ENCODE measurements at regions of chr5 and their contacts with region 1.

Region 1: DNA sequence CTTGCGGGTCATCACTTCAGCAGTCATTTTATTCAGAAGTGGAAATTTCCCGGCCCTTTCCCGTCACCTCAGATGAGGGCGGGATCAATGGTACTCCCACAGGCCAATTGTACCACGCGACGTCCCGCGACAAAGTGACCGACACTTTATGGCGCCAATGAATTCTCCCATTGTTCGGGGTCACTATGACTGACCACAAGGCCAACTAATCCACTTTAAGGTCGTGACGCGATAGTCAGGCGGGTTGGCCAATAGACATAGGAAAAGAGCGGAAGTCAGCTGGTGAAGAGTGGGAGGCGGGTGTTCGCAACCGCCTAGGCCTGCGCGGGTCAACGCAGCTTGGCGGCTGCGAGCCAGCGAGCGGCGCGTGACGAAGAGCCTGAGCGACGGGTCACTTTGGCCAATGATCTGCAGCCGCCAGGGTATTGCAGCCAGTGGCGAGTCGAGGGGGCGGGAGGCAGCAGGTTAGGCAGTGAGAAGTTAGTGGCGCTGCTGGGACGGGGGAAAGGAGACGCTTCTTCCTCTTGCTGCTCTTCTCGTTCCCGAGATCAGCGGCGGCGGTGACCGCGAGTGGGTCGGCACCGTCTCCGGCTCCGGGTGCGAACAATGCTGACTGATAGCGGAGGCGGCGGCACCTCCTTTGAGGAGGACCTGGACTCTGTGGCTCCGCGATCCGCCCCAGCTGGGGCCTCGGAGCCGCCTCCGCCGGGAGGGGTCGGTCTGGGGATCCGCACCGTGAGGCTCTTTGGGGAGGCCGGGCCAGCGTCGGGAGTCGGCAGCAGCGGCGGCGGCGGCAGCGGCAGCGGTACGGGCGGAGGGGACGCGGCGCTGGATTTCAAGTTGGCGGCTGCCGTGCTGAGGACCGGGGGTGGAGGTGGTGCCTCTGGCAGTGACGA is at the start of gene ANKHD1:
- DNase-seq: peak; percentile 98
- ATAC-seq: peak; percentile 83
- H3K4me3 Mint-ChIP-seq: no peak within 1 kb of the TSS
- H3K27ac Mint-ChIP-seq: peak within 1 kb of the TSS; percentile 87
- H3K4me1 Mint-ChIP-seq: peaks cover 24% of the 10 kb centered on the region
- H3K27me3 Mint-ChIP-seq: no peaks in the 10 kb centered on the region
- total RNA-seq, gene ANKHD1: 77.1 to 93.5 TPM

Region 2: DNA sequence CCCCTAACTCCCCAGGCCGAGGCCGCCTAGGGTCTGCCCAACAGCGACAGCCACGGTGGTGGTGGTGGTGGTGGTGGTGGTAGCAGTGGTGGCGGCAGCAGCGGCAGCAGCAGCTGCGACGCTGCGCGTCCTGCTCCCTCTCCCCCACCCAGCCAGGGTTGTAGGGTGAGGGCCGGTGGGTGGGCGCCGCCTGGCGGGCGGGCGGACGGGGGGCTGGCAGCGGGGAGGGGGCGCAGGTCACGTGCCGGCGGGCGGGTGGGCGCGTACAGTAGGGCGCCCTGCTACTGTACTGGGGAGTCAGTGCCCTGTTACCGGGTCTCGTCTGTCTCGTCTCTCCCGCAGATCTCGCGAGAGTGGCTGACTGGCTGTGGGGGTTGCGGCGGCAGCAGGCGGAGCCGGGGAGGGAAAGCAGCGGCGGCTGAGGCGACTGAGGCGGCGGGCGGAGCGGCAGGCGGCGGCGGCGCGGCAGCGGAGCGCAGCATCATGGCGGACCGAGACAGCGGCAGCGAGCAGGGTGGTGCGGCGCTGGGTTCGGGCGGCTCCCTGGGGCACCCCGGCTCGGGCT is 287.8 kb before region 1 on chr5 and contains the start of gene PURA:
- CTCF ChIA-PET with region 1: no interaction called
- POLR2A ChIA-PET with region 1: no interaction called
- intact Hi-C with region 1: loop called in 1 of 2 experiments (anchors 1 kb)
- DNase-seq: peak; percentile 98
- ATAC-seq: peak; percentile 92
- H3K4me3 Mint-ChIP-seq: peak within 1 kb of the TSS; percentile 89
- H3K27ac Mint-ChIP-seq: peak within 1 kb of the TSS; percentile 84
- H3K4me1 Mint-ChIP-seq: peaks cover 65% of the 10 kb centered on the region
- H3K27me3 Mint-ChIP-seq: peaks cover 3% of the 10 kb centered on the region
- total RNA-seq, gene PURA: 9.5 to 10.7 TPM

Region 3: DNA sequence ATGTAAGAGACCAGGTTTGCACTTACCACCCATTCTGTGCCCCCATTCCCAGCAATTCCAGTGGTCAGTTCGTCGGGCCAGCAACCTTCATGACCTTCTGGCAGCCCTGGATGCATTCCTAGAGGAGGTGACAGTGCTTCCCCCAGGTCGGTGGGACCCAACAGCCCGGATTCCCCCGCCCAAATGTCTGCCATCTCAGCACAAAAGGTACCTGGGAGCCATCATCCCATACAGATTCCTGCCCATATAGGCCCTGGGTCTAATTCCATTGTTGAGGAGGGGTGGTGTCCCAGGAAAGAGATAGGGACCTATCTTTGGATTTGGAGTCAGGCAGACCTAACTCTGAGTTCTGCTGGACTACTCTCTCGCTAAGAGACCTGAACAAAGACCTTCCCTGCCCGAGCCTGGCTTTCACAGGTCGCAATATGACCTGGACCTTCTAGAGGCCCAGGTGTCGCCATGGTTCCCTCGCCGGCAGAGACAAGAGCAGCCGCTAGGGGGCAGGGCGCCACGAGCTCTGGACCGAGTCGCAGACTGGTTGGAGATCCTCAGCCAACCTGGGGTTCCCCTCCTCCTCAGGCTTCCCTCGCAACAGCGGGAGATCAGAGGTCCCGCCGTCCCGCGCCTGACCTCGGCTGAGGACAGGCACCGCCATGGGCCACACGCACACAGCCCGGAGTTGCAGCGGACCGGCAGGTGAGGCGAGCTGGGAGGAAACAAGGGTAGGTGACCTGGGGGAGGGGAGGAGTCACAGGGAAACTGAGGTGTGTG is 38.6 kb before region 1 on chr5:
- CTCF ChIA-PET with region 1: interaction called, 5 read pairs
- POLR2A ChIA-PET with region 1: interaction called, 3 read pairs
- intact Hi-C with region 1: loop called in 1 of 2 experiments (anchors 2 kb)
- DNase-seq: peak; percentile 93
- ATAC-seq: peak; percentile 95
- H3K4me3 Mint-ChIP-seq: peak overlapping the region; percentile 70
- H3K27ac Mint-ChIP-seq: peak overlapping the region; percentile 61
- H3K4me1 Mint-ChIP-seq: peaks cover 11% of the 10 kb centered on the region
- H3K27me3 Mint-ChIP-seq: peaks cover 5% of the 10 kb centered on the region

Region 4: GRCh38 chr5:140564196-140565023 is 162.8 kb after region 1 on chr5 and contains the starts of genes APBB3 and SLC35A4:
- CTCF ChIA-PET with region 1: no interaction called
- POLR2A ChIA-PET with region 1: no interaction called
- intact Hi-C with region 1: loop called (anchors 1 kb)
- DNase-seq: peak; percentile 96
- ATAC-seq: peak; percentile 95
- H3K4me3 Mint-ChIP-seq: peak within 1 kb of the TSS; percentile 98
- H3K27ac Mint-ChIP-seq: peak within 1 kb of the TSS; percentile 99
- H3K4me1 Mint-ChIP-seq: peaks cover 49% of the 10 kb centered on the region
- H3K27me3 Mint-ChIP-seq: no peaks in the 10 kb centered on the region
- total RNA-seq, gene APBB3: 12.8 to 19.0 TPM
- total RNA-seq, gene SLC35A4: 61.8 to 65.4 TPM

Region 5: GRCh38 chr5:140647042-140647341 is 245.4 kb after region 1 on chr5:
- CTCF ChIA-PET with region 1: no interaction called
- POLR2A ChIA-PET with region 1: interaction called, 13 read pairs
- intact Hi-C with region 1: loop called in 1 of 2 experiments (anchors 1 kb)
- DNase-seq: no peak
- ATAC-seq: peak; percentile 14
- H3K4me3 Mint-ChIP-seq: peak overlapping the region; percentile 97
- H3K27ac Mint-ChIP-seq: peak overlapping the region; percentile 98
- H3K4me1 Mint-ChIP-seq: peaks cover 27% of the 10 kb centered on the region
- H3K27me3 Mint-ChIP-seq: no peaks in the 10 kb centered on the region

Region 6: GRCh38 chr5:140700177-140701144 is 298.9 kb after region 1 on chr5 and contains the start of gene ZMAT2:
- CTCF ChIA-PET with region 1: interaction called, 3 read pairs
- POLR2A ChIA-PET with region 1: interaction called, 3 read pairs
- intact Hi-C with region 1: loop called (anchors 1 kb)
- DNase-seq: peak; percentile 96
- ATAC-seq: peak; percentile 100
- H3K4me3 Mint-ChIP-seq: peak within 1 kb of the TSS; percentile 94
- H3K27ac Mint-ChIP-seq: peak within 1 kb of the TSS; percentile 94
- H3K4me1 Mint-ChIP-seq: peaks cover 24% of the 10 kb centered on the region
- H3K27me3 Mint-ChIP-seq: no peaks in the 10 kb centered on the region
- total RNA-seq, gene ZMAT2: 49.9 to 55.3 TPM

Region 7: GRCh38 chr5:140926443-140927227 is 525.0 kb after region 1 on chr5:
- CTCF ChIA-PET with region 1: no interaction called
- POLR2A ChIA-PET with region 1: no interaction called
- intact Hi-C with region 1: no loop called
- DNase-seq: peak; percentile 70
- ATAC-seq: peak; percentile 55
- H3K4me3 Mint-ChIP-seq: peak overlapping the region; percentile 40
- H3K27ac Mint-ChIP-seq: no peak overlapping the region
- H3K4me1 Mint-ChIP-seq: peaks cover 7% of the 10 kb centered on the region
- H3K27me3 Mint-ChIP-seq: peaks cover 51% of the 10 kb centered on the region

Region 8: DNA sequence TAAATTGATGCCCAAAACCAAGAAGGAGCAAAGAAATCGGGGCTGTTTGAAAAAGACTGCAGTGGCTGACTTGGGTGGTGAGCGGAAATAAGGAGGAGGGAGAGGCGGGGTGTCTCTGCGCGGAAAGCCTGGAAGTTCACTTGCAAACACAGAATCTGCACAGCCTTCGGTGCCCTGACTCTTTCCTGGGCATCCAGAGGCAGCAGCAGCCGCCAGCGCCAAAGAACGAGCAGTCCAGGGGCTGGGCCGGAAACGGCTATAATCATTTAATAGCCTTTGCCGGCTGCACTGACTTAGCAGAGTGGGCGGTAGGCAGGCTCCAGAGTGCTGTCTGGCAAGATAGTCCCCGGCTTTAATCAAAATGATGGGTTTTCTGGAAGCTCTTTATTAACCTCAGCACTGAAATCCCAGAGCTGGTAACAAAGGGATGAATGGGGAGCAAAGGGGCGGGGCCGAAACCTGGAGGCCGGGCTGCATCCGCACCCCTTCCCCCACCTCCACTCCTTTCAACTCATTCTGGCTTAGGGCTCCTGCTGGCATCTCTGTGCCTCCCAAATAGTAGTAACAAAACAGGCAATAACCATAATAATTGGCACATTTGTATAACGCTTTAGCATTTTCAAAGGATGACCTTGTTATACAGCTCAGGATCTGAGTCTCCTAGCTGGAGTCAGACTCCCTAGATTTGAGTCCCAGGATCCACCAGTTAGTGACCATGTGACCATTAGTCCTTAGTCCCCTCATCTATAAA is 600.4 kb after region 1 on chr5:
- CTCF ChIA-PET with region 1: no interaction called
- POLR2A ChIA-PET with region 1: no interaction called
- intact Hi-C with region 1: no loop called
- DNase-seq: peak; percentile 6
- ATAC-seq: no peak
- H3K4me3 Mint-ChIP-seq: peak overlapping the region; percentile 47
- H3K27ac Mint-ChIP-seq: no peak overlapping the region
- H3K4me1 Mint-ChIP-seq: peaks cover 8% of the 10 kb centered on the region
- H3K27me3 Mint-ChIP-seq: peaks cover 30% of the 10 kb centered on the region

Region 9: DNA sequence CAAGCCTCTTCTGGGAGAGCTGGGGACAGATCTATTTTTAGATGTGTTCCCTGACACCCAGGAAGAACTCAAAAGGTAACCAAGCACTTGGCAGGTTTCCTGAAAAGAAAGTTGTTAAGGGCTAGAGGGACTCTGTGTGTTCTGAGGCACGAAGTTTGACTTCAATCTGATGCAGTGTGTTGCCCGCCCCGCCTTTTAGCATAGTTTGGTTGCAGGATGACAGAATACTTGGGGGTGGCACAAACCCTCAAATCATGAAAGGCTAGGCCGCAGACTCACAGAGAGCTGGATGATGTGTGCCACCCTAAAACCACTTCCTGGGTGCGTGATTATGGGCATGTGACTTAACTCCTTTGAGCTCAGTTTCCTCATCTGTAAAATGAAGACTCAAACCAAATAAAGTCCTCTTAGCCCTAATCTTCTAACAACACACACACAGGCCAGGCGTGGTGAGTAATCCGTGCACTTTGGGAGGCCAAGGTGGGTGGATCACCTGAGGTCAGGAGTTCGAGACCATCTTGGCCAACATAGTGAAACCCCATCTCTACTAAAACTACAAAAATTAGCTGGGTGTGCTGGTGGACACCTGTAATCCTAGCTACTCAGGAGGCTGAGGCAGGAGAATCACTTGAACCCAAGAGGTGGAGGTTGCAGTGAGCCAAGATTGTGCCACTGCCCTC is 1694.2 kb after region 1 on chr5:
- CTCF ChIA-PET with region 1: no interaction called
- POLR2A ChIA-PET with region 1: no interaction called
- intact Hi-C with region 1: loop called in 1 of 2 experiments (anchors 5 kb)
- DNase-seq: peak; percentile 93
- ATAC-seq: peak; percentile 91
- H3K4me3 Mint-ChIP-seq: peak overlapping the region; percentile 53
- H3K27ac Mint-ChIP-seq: peak overlapping the region; percentile 97
- H3K4me1 Mint-ChIP-seq: peaks cover 77% of the 10 kb centered on the region
- H3K27me3 Mint-ChIP-seq: no peaks in the 10 kb centered on the region